CD8-positive, alpha-beta T cell (primary cell): ENCODE measurements at regions of chr3 and their contacts with region 1.

Region 1: DNA sequence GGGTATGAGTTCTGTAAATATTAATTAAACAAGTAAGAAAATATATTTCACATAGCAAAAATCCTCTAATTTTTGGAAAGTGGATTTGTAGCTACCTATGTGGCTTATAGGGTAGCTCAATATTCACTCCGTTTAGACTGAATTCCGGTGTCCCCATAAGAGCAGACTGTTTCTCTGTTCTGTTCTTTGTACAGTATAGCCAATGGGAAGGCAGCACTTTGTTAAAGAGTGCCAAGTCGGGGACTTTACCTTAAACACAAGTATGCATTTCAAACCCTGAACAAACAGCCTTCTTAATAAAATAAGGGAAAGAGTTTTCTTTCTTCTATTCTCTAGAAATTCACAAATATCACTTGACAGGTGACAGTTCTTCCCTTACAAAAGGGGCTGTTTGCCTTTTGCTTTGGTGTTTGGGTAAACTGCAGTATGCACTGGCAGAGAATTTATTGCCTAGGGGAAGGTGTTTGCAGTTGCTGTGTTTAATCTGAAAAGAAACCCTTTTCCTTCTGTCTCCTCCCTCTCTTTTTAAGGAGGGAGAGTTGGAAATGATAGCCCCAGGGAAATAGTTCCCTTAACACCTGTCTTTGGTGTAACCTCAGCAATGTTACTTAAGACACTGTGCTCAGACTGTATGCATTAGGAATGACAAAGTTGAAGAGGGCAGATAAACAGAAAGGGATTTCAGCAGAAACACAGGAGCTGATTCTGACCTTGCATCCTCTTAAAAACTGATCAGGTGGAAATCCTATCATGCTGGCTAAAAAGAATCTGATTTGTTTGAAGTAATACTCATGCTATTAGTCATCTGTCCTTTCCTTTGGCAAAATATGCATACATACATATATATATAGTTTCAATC is 125.3 kb downstream of the TP63 start:
- DNase-seq: no peak
- ATAC-seq: no peak
- H3K4me3 ChIP-seq: no peak overlapping the region
- H3K4me3 Mint-ChIP-seq: no peak overlapping the region
- H3K27ac ChIP-seq: no peak overlapping the region
- H3K27ac Mint-ChIP-seq: no peak overlapping the region
- H3K4me1 ChIP-seq: no peaks in the 10 kb centered on the region
- H3K4me1 Mint-ChIP-seq: no peaks in the 10 kb centered on the region
- H3K27me3 ChIP-seq: no peaks in the 10 kb centered on the region
- H3K27me3 Mint-ChIP-seq: no peaks in the 10 kb centered on the region
- CTCF ChIP-seq: no peak

Region 2: DNA sequence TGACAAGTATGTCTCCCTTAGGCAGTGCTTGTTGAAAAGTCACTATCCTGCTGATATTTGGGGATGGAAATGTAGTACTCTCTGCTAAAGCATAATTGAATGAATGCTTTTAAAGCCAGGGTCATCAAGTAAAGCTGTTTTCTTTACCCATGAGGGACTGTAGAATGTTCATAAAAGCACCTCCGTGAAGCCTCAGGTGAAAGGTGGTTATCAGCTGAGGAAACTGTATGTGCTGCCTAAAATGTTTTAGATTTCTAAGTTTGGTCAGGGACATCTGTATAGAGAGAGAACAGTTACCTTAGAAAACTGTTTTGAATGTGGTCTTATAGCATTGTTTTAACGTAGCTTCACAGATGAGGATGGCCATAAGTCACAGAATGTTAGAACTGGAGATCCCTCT is 45.7 kb after region 1 on chr3:
- CTCF ChIA-PET with region 1: no interaction called
- POLR2A ChIA-PET with region 1: no interaction called
- intact Hi-C with region 1: loop called in 1 of 2 experiments (anchors 1 kb)
- DNase-seq: no peak
- ATAC-seq: no peak
- H3K4me3 ChIP-seq: no peak overlapping the region
- H3K4me3 Mint-ChIP-seq: no peak overlapping the region
- H3K27ac ChIP-seq: no peak overlapping the region
- H3K27ac Mint-ChIP-seq: no peak overlapping the region
- H3K4me1 ChIP-seq: no peaks in the 10 kb centered on the region
- H3K4me1 Mint-ChIP-seq: no peaks in the 10 kb centered on the region
- H3K27me3 ChIP-seq: no peaks in the 10 kb centered on the region
- H3K27me3 Mint-ChIP-seq: no peaks in the 10 kb centered on the region
- CTCF ChIP-seq: no peak